ENCODE measurements at regions of chr16 and their contacts with region 1.

Region 1: DNA sequence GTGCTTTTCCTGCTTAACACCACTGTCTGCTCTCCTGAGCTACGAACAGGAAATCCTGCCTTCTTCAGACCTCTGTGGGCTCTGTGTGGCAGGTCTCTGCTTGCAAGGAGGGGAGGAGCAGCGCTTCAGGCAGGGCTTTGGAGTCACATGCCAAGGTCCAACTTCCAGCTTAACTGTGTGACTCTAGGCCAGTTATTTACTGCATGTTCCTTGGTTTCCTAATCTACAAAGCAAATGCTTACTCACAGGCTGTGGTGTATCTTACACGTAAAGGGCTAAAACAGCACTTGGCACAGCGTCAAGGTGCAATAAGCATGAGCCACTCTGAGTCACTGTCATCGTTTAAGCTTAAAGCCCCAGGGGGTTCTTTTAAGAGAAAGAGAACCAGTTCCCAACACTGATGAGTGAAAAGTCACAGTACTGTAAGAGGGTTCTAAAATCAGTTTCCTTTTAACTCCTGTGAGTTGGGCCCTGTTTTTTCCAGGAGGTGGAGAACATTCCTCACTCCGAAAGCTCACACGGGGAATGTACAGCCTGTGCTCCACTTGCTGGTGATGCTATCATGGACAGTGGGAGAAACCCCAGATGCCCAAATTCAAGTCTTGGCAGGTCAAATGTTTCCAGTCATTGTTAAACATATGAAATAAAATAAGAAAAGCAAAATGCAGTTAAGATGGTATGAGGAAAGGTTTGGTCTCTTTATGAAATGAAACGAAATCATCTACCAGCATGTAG is 54.1 kb upstream of the BCAR1 start:
- DNase-seq: peak; percentile 92
- H3K4me3 Mint-ChIP-seq: peak overlapping the region; percentile 63
- H3K27ac Mint-ChIP-seq: peak overlapping the region; percentile 99
- H3K4me1 Mint-ChIP-seq: peaks cover 63% of the 10 kb centered on the region
- H3K27me3 Mint-ChIP-seq: no peaks in the 10 kb centered on the region
- CTCF ChIP-seq: no peak

Region 2: DNA sequence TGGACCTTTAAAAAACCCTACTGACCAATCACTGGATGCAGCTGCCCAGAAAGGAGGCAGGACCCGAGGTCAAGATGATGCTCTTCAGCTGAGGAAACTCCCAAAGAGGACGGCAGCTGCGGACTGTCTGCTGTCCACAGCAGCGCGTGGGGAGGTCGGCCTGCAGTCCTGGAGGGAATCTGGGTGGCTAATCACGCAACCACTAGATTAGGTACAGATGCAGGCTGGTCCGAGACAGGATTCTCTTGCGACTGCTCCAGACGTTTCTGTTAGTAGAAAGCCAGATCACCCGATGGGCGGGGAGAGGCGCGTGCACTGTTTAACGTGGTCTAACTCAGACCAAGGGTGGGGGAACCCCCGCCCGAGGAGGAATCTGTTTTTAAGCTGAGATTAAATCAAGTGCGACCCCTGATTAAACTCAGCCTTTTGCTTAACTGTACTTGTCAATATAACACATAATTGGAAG is 107.4 kb before region 1 on chr16:
- CTCF ChIA-PET with region 1: interaction called, 14 read pairs
- intact Hi-C with region 1: no loop called
- DNase-seq: no peak
- H3K4me3 Mint-ChIP-seq: no peak overlapping the region
- H3K27ac Mint-ChIP-seq: no peak overlapping the region
- H3K4me1 Mint-ChIP-seq: peaks cover 11% of the 10 kb centered on the region
- H3K27me3 Mint-ChIP-seq: peaks cover 46% of the 10 kb centered on the region
- CTCF ChIP-seq: no peak

Region 3: GRCh38 chr16:75244844-75245758 is 60.4 kb before region 1 on chr16:
- CTCF ChIA-PET with region 1: interaction called, 9 read pairs
- intact Hi-C with region 1: loop called (anchors 2 kb)
- DNase-seq: peak; percentile 96
- H3K4me3 Mint-ChIP-seq: peak overlapping the region; percentile 96
- H3K27ac Mint-ChIP-seq: peak overlapping the region; percentile 93
- H3K4me1 Mint-ChIP-seq: peaks cover 88% of the 10 kb centered on the region
- H3K27me3 Mint-ChIP-seq: no peaks in the 10 kb centered on the region
- CTCF ChIP-seq: no peak

Region 4: DNA sequence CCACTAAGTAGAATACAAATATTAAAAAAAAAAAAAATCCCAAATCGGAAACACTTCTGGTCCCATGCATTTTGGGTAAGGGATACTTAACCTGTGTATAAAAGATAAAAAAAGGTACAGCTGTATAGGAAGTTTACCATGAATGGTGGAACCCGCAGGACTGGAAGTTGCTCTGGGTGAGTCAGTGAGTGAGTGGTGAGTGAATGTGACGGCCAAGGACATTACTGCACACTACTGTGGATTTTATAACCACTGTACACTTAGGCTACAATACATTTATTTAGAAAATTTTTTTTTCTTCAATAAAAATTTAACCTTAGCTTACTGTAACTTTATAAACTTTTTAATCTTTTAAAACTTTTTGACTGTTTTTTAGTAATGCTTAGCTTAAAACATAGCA is 17.2 kb after region 1 on chr16:
- CTCF ChIA-PET with region 1: interaction called, 5 read pairs
- intact Hi-C with region 1: loop called (anchors 2 kb)
- DNase-seq: no peak
- H3K4me3 Mint-ChIP-seq: no peak overlapping the region
- H3K27ac Mint-ChIP-seq: no peak overlapping the region
- H3K4me1 Mint-ChIP-seq: peaks cover 16% of the 10 kb centered on the region
- H3K27me3 Mint-ChIP-seq: no peaks in the 10 kb centered on the region
- CTCF ChIP-seq: no peak

Region 5: DNA sequence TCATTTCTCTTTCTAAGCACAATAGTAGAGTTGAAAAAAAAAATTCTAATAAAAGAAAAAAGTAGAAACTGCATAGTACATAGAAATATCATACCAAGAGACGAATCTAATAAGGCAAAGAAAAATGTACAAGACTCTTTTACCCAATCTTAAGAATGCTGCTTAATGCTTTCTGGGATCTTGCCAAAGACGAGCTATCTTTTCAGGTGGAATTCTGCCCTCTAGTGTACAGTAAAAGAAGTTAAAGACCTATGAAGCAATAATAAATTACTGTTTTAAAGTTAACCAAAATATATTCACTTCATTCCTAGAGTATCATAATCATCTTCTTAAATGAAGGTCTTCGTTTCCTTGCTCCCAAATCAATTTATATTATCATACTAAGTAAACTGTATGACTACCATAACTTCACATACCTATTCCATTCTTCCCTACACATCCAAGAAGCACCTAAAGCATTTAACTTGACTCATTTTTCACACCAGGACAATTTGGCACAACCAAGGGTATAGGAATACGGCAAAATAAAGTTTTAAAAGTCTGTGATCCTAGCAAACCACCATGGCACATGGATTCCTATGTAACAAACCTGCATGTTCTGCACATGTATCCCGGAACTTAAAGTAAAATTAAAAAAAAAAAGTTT is 80.1 kb after region 1 on chr16:
- CTCF ChIA-PET with region 1: interaction called, 9 read pairs
- intact Hi-C with region 1: loop called (anchors 1 kb)
- DNase-seq: no peak
- H3K4me3 Mint-ChIP-seq: no peak overlapping the region
- H3K27ac Mint-ChIP-seq: no peak overlapping the region
- H3K4me1 Mint-ChIP-seq: peaks cover 9% of the 10 kb centered on the region
- H3K27me3 Mint-ChIP-seq: no peaks in the 10 kb centered on the region
- CTCF ChIP-seq: peak; percentile 67

Measured in Calu3 (cell line).